ENCODE measurements at regions of chr1 and their contacts with region 1.

Region 1: GRCh38 chr1:145845514-145846161 is at the start of gene NUDT17:
- DNase-seq: peak; percentile 79
- H3K4me3 Mint-ChIP-seq: no peak within 1 kb of the TSS
- H3K27ac Mint-ChIP-seq: no peak within 1 kb of the TSS
- H3K4me1 Mint-ChIP-seq: peaks cover 11% of the 10 kb centered on the region
- H3K27me3 Mint-ChIP-seq: no peaks in the 10 kb centered on the region
- total RNA-seq, gene NUDT17: 2.7 to 3.4 TPM

Region 2: DNA sequence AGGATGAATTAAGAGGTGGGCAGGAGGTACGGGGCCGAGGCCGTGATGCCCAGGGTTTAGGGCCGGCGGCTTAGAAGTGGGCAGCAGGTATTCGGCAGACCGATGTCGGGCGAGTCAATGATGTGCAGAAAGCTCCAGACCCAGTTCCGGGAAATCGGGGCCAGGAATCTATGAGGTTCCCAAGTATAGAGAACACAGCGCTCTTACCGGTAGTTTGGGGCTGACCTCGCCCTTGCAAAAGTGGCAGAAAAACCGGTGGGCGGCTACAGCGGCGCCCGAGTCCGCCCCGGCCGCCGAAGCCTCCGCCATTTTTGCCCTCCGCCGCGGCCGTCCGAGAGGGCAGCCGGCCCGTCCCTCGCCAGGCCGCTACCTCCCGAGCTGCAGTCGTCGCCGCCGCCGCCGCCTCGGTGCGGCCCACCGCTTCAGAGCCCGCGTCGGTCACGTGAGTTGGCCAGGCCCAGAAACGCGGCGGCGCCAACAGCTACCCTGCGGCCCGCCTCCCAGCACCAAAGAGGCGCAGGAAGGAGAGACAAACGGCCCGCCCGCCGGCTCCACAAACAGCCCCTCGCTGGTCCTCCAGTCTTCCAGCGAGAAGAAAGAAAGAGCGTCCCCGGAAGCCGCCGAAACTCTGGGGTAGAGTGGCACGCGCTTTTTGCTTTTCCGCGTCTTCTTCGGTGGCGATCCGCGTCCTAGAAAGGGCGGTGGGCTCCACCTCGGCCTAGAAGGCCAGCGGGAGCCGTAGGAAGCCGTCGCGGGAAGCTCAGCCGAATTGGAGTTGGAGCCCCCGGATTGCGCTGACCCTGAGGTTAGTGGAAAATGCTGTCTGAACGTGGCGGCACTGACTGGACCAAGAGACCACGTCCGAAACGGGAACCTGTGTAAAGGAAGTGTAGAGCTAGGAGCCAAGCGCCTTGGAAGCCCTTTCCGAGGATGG is 21.8 kb before region 1 on chr1 and contains the starts of genes POLR3C and RNF115:
- CTCF ChIA-PET with region 1: interaction called, 24 read pairs
- POLR2A ChIA-PET with region 1: no interaction called
- DNase-seq: peak; percentile 92
- H3K4me3 Mint-ChIP-seq: peak within 1 kb of the TSS; percentile 96
- H3K27ac Mint-ChIP-seq: peak within 1 kb of the TSS; percentile 95
- H3K4me1 Mint-ChIP-seq: peaks cover 37% of the 10 kb centered on the region
- H3K27me3 Mint-ChIP-seq: no peaks in the 10 kb centered on the region
- total RNA-seq, gene POLR3C: 34.5 to 38.7 TPM
- total RNA-seq, gene RNF115: 14.8 to 15.6 TPM

Region 3: GRCh38 chr1:145871994-145872924 is 26.6 kb after region 1 on chr1:
- CTCF ChIA-PET with region 1: interaction called, 21 read pairs
- POLR2A ChIA-PET with region 1: no interaction called
- DNase-seq: peak; percentile 49
- H3K4me3 Mint-ChIP-seq: peak overlapping the region; percentile 66
- H3K27ac Mint-ChIP-seq: peak overlapping the region; percentile 63
- H3K4me1 Mint-ChIP-seq: peaks cover 18% of the 10 kb centered on the region
- H3K27me3 Mint-ChIP-seq: peaks cover 50% of the 10 kb centered on the region

Region 4: DNA sequence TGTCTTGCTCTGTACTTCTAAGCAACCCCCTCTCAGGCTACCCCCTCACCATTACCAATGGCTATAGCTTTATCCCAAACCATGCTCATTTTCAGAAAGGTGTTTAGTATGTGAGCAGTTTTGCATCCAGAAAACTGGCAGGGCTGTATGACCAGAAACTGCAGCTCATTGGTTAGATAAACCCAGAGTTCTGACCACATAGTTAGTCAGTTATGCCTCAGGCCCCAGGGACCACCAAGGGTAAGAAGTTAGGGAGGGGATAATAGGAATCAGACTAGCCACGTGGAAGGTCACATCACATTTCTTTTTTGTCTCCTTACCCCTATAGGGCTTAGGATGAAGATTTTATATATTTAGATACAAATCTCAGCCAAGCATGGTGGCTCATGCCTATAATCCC is 63.0 kb after region 1 on chr1:
- CTCF ChIA-PET with region 1: interaction called, 16 read pairs
- POLR2A ChIA-PET with region 1: no interaction called
- DNase-seq: no peak
- H3K4me3 Mint-ChIP-seq: no peak overlapping the region
- H3K27ac Mint-ChIP-seq: no peak overlapping the region
- H3K4me1 Mint-ChIP-seq: peaks cover 6% of the 10 kb centered on the region
- H3K27me3 Mint-ChIP-seq: no peaks in the 10 kb centered on the region

Region 5: DNA sequence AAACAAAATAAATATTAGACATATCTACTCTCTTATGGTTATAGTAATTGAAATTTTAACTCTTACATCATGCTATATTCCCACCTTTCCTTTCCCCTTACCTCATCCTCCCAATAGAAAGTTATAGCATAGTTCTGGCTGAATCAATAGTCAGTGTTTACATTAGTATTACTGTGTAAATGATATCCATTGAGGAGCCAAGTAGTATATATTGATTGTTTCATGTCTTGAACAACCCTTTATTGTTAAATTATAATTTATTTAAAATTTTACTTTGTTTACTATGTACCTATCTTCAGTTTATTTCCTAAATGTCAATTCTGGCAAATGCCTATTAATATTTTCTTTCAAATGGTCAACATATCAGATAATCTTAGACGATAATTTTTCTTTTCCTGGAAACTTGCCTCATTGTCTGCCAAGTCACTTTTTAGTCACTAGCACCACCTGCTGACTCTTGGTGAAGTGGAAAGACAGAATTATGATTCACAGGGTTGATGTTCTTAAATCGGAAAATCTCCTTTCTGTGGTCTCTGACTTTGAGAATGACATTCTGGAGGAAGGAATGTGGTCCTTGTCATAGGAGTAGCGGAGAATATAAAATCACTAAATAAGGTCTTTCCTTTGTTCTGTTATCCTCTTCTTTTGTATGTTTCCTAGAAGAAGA is 167.2 kb after region 1 on chr1:
- CTCF ChIA-PET with region 1: interaction called, 17 read pairs
- POLR2A ChIA-PET with region 1: no interaction called
- DNase-seq: peak; percentile 76
- H3K4me3 Mint-ChIP-seq: no peak overlapping the region
- H3K27ac Mint-ChIP-seq: no peak overlapping the region
- H3K4me1 Mint-ChIP-seq: peaks cover 16% of the 10 kb centered on the region
- H3K27me3 Mint-ChIP-seq: peaks cover 21% of the 10 kb centered on the region

Measured in activated CD4-positive, alpha-beta T cell treated with anti-CD3 and anti-CD28 coated beads, Interleukin-2, amount 10 ng/mL, durations not matched to agents 7 days and 5 days (primary cell).